ENCODE measurements at regions of chr10 and their contacts with region 1.

Region 1: GRCh38 chr10:113958631-113959382 is 84.9 kb upstream of the ADRB1 start:
- DNase-seq: peak in 4 of 10 donors; percentile 39 to 64 (median 58)
- H3K4me3 ChIP-seq: no peak overlapping the region
- H3K27ac ChIP-seq: peak overlapping the region in 56 of 59 donors; percentile 8 to 91 (median 74)
- H3K27me3 ChIP-seq: no peaks in the 10 kb centered on the region
- CTCF ChIP-seq: no peak

Region 2: DNA sequence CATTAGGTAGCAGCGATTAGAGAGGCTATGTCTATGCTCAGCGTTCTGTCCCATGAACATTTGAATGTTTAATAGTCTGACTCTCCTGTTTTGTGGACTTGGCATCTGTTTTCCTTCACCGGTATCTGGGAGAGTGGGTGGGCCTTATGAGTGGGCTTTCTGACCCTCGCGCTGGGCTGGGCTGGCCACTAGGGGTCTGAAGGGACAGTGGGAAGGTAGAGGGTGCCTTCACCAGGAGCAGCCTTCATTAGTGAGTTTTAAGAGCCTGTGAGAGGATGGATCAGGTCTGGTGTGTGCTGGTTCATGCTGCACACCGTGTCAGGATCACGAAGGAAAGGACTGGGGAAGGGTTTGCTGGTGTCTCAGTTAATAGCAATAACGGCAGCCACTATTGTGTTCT is 138.3 kb before region 1 on chr10:
- intact Hi-C with region 1: no loop called
- DNase-seq: no peak
- H3K4me3 ChIP-seq: no peak overlapping the region
- H3K27ac ChIP-seq: no peak overlapping the region
- H3K27me3 ChIP-seq: no peaks in the 10 kb centered on the region
- CTCF ChIP-seq: no peak

Region 3: DNA sequence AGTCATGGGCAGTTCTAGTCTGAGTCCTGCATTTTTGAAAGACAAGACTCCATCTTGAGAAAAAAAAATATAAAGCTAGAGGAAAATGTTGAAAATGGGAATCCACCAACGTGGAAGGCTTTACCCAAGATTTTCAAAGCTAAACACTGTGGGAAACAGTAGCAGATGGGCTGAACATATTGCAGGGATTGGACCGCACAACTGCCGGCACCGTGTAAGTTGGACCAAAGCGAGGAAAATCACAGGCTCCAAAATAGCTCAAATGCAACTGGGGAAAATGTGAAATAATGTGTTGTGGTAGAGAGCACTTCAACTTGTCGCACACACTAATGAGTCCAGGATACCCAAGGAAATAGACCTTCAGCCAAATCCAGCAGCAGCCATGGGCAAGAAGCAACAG is 58.5 kb after region 1 on chr10:
- intact Hi-C with region 1: loop called in 1 of 2 experiments (anchors 1 kb)
- DNase-seq: peak in 2 of 10 donors; percentile 44 to 70
- H3K4me3 ChIP-seq: no peak overlapping the region
- H3K27ac ChIP-seq: peak overlapping the region in 40 of 59 donors; percentile 5 to 78 (median 62)
- H3K27me3 ChIP-seq: no peaks in the 10 kb centered on the region
- CTCF ChIP-seq: no peak

Region 4: DNA sequence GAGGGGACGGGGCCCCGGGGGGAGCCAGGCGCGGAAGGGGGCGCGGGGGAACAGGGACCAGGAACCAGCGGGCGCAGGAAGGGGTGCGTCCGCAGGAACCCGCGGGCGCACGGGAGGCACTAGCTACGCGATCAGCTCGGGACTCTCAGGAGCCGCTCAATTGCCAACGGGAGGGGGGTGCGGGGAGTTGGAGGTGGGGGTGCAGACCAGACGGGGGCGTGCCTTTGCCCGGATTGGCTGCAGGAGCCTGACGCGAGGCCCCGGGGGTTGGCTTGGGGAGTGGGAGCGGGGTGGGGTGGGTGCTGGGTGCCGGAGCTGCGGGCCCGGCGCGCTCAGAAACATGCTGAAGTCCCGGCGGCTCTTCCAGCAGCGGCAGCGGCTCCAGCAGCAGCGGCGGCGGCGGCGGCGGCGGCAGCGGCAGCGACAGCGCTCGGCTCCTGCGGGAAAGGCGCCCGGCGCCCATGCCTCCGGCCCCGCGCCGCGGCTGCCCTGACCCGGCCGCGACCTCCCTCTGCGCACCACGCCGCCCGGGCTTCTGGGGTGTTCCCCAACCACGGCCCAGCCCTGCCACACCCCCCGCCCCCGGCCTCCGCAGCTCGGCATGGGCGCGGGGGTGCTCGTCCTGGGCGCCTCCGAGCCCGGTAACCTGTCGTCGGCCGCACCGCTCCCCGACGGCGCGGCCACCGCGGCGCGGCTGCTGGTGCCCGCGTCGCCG is 84.9 kb after region 1 on chr10 and contains the start of gene ADRB1:
- intact Hi-C with region 1: loop called in 1 of 2 experiments (anchors 5 kb)
- DNase-seq: peak; percentile 62 to 93 (median 88)
- H3K4me3 ChIP-seq: peak within 1 kb of the TSS; percentile 37 to 75 (median 63)
- H3K27ac ChIP-seq: peak within 1 kb of the TSS in 57 of 59 donors; percentile 18 to 94 (median 84)
- H3K27me3 ChIP-seq: peaks cover 0 to 12% (median 0%) of the 10 kb centered on the region in 45 donors
- CTCF ChIP-seq: no peak
- total RNA-seq, gene ADRB1: 7.9 to 37.2 (median 21.1) TPM

Measured in dorsolateral prefrontal cortex (tissue), 120 donors.